A673 (cell line): ENCODE measurements at regions of chr7 and their contacts with region 1.

Region 1: DNA sequence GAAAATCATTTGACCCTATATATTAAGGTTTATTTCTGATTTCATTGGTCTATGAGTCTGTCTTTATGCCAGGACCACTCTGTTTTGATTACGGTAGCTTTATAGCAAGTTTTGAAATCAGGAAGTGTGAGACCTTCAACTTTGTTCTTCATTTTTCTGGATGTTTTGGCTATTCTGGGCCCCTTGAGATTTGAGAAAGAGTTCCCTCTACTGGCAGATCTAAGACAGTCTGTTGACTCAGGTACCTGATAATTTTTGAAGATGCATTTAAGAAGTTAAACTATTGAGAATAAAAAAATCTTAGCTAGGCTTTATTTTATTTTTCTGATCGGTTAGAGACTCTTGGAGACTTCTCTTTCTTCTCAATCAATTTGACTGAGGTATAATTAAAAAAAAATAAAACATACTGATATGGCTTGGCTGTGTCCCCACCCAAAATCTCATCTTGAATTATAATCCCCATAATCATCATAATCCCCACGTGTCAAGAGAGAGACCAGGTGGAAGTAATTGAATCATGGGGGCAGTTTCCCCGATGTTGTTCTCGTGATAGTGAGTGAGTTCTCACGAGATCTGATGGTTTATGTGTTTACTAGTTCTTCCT is 209.2 kb downstream of the SNX10 start:
- DNase-seq: peak; percentile 36
- H3K4me3 ChIP-seq: no peak overlapping the region
- H3K27ac ChIP-seq: no peak overlapping the region
- H3K4me1 ChIP-seq: no peaks in the 10 kb centered on the region
- H3K27me3 ChIP-seq: peaks cover 61% of the 10 kb centered on the region
- CTCF ChIP-seq: peak; percentile 63

Region 2: DNA sequence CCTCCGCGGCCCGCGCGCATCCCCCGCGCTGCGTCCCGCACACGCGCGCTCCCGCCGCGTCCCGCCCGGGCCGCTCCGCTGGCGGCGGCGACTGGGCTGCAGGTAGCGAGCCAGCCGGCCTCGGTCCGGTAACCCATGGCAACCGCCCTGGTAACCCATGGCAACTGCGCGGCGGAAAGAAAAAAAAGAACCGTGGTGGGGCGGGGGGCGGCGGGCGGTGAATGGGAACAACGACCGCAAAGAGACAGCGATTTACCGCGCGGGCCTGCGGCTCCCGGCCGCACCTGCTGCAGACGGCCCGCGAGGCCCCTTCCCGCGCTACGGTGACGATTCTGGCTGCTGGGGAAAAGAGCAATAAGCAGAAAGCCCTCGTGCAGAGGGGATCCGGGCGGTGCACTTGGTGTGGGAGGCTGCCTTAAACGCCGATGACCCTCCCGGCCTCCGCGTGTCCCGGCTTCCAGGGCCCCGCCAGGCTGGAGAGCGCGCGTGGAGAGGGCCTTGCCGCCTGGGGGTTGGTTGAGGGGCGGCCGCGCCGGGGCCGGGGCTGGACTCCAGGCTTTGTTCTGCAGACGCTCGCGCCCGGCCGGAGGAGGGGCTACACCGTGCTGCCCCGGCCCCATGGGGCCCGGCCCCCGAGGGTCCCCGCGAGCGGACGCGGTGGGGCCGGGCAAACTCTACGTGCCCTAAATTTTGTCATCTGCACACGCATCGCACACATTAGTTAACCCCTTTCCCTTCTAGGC is 124.5 kb before region 1 on chr7:
- CTCF ChIA-PET with region 1: no interaction called
- POLR2A ChIA-PET with region 1: no interaction called
- intact Hi-C with region 1: loop called (anchors 5 kb)
- DNase-seq: no peak
- H3K4me3 ChIP-seq: peak overlapping the region; percentile 25
- H3K27ac ChIP-seq: no peak overlapping the region
- H3K4me1 ChIP-seq: peaks cover 11% of the 10 kb centered on the region
- H3K27me3 ChIP-seq: peaks cover 96% of the 10 kb centered on the region
- CTCF ChIP-seq: no peak

Region 3: GRCh38 chr7:27515933-27516332 is 1015.1 kb after region 1 on chr7:
- CTCF ChIA-PET with region 1: no interaction called
- POLR2A ChIA-PET with region 1: no interaction called
- intact Hi-C with region 1: no loop called
- DNase-seq: no peak
- H3K4me3 ChIP-seq: no peak overlapping the region
- H3K27ac ChIP-seq: no peak overlapping the region
- H3K4me1 ChIP-seq: no peaks in the 10 kb centered on the region
- H3K27me3 ChIP-seq: no peaks in the 10 kb centered on the region
- CTCF ChIP-seq: no peak